Spleen (tissue), 13 donors: ENCODE measurements at regions of chr19 and their contacts with region 1.

Region 1: DNA sequence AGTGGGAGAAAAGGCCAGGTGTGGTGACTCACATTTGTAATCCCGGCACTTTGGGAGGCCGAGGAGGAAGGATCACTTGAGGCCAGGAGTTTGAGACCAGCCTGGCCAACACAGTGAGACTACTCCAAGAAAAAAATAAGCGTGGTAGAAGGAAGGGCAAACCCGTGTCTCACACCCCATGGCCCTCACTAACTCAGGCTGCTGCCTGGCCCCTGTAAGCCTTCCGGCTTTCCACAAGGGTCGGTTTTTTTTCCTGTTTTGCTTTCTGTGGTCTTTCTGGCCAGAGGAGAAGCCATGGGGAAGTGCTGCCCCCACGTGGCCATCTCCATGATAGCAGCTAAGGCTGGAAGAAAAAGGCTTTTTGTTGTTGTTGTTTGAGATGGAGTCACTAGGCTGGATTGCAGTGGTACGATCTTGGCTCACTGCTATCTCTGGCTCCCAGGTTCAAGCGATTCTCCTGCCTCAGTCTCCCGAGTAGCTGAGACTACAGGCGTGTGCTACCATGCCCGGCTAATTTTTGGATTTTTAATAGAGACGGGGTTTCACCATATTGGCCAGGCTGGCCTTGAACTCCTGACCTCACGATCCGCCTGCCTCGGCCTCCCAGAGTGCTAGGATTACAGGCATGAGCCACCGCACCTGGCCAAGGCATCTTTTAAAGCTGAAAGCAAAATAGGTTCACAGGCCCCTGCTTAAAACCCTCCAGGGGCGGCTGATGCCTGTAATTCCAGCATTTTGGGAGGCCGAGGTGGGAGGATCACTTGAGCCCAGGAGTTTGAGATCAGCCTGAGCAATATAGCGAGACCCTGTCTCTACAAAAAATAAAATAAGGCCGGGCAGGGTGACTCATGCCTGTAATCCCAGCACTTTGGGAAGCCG is 7.5 kb upstream of the ARHGEF18 start:
- DNase-seq: peak; percentile 95
- H3K4me3 ChIP-seq: no peak overlapping the region
- H3K27ac ChIP-seq: peak overlapping the region in 6 of 8 donors; percentile 44 to 95 (median 80)
- H3K4me1 ChIP-seq: peaks cover 35 to 100% (median 92%) of the 10 kb centered on the region in 6 donors
- H3K27me3 ChIP-seq: no peaks in the 10 kb centered on the region
- CTCF ChIP-seq: peak; percentile 90 to 98 (median 97)
- POLR2A ChIP-seq: no peak

Region 2: DNA sequence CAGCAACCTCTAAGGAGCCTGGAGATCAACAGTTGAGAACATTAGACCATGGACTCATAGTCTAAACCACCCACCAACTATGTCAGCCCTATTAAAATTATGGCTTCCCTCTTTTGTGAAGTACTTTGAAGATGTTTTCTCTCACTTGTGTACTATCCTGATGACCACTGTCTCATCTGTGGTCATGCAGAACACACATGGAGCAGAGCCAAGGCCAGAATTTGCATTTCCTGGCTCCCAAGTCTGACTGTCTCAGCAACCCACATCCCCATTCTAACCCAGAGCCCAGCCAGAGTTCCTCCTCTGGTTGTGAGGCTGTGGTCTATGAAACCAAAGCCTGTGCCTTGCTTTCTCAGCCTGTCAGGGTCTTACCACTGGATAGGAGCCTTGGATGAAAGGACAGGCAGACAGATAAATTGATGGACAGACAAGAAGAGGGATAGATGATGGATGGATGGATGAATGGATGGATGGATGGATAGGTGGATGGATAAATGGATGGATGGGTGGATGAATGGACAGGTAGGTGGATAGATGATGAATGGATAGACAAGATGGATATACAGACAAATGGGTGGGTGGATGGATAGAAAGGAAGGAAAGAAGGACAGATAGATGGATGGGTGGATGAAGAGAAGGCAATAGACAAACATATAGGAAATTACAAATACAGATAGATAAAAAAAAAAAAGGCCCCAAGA is 236.3 kb before region 1 on chr19:
- intact Hi-C with region 1: loop called (anchors 5 kb)
- DNase-seq: no peak
- H3K4me3 ChIP-seq: no peak overlapping the region
- H3K27ac ChIP-seq: no peak overlapping the region
- H3K4me1 ChIP-seq: peaks cover under 1 to 17% (median 9%) of the 10 kb centered on the region in 6 donors
- H3K27me3 ChIP-seq: no peaks in the 10 kb centered on the region
- CTCF ChIP-seq: no peak
- POLR2A ChIP-seq: no peak

Region 3: DNA sequence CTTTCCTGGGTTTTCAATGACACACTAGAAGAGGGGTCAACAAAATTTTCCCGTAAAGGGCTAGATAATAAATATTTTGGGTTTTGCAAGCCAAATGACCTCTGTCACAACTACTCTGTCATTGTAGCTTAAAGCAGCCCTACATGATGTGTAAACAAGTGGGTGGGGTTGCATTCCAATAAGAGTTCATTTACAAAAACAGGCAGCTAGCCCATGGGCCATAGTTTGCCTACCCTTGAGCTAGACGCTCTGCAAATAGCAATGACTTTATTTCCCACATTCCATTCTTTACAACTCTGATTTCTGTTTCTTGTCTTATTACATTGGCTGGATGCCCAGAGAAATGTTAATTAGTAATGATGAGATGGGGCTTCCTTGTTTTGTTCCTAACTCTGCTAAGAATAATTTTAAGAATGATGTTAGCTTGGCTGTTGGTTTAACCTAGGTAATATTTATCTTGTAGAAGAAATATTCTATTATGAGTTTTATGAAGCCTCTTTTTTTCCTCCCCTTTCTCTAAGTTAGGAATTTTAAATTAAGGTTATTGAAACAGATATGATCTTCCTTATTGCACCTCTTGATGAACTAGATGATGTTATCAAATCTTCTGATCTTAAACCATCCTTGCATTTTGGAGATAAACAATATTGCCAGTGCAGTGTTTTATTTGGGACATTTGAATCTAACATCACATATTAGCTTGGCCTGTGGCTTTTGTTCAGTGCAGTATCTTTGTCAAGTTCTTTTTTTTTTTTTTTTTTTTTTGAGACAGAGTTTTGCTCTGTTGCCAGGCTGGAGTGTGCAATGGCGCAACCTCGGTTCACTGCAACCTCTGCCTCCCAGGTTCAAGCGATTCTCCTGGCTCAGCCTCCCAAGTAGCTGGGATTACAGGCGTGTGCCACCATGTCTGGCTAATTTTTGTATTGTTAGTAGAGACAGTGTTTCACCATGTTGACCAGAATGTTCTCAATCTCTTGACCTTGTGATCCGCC is 195.4 kb before region 1 on chr19:
- intact Hi-C with region 1: loop called (anchors 5 kb)
- DNase-seq: no peak
- H3K4me3 ChIP-seq: no peak overlapping the region
- H3K27ac ChIP-seq: no peak overlapping the region
- H3K4me1 ChIP-seq: peaks cover 0 to 6% (median 0%) of the 10 kb centered on the region in 6 donors
- H3K27me3 ChIP-seq: no peaks in the 10 kb centered on the region
- CTCF ChIP-seq: no peak
- POLR2A ChIP-seq: no peak

Region 4: DNA sequence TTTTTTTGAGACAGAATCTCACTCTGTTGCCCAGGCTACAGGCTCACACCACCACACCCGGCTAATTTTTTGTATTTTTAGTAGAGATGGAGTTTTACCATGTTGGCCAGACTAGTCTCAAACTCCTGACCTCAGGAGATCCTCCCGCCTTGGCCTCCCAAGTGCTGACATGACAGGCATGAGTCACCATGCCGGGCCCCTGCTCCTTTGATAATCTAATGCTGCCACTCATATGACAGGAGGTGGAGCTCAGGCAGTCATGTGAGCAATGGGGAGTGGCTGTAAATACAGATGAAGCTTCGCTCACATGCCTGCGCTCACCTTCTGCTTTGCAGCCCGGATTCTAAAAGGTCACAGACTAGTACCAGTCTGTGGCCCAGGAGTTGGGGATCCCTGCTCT is 32.7 kb after region 1 on chr19:
- intact Hi-C with region 1: no loop called
- DNase-seq: no peak
- H3K4me3 ChIP-seq: no peak overlapping the region
- H3K27ac ChIP-seq: no peak overlapping the region
- H3K4me1 ChIP-seq: peaks cover 0 to 12% (median 5%) of the 10 kb centered on the region in 6 donors
- H3K27me3 ChIP-seq: no peaks in the 10 kb centered on the region
- CTCF ChIP-seq: no peak
- POLR2A ChIP-seq: no peak